Activated CD4-positive, alpha-beta memory T cell treated with anti-CD3 and anti-CD28 coated beads, Interleukin-2, amount 10 ng/mL, durations not matched to agents 7 days and 5 days (primary cell): ENCODE measurements at regions of chr6 and their contacts with region 1.

Region 1: GRCh38 chr6:44475779-44476434 is 88.4 kb downstream of the CDC5L start:
- DNase-seq: peak; percentile 77
- H3K4me3 Mint-ChIP-seq: no peak overlapping the region
- H3K27ac Mint-ChIP-seq: peak overlapping the region; percentile 26
- H3K4me1 Mint-ChIP-seq: peaks cover 4% of the 10 kb centered on the region
- H3K27me3 Mint-ChIP-seq: peaks cover 2% of the 10 kb centered on the region

Region 2: GRCh38 chr6:44397424-44398164 is 78.3 kb before region 1 on chr6:
- CTCF ChIA-PET with region 1: no interaction called
- POLR2A ChIA-PET with region 1: no interaction called
- DNase-seq: no peak
- H3K4me3 Mint-ChIP-seq: no peak overlapping the region
- H3K27ac Mint-ChIP-seq: no peak overlapping the region
- H3K4me1 Mint-ChIP-seq: peaks cover 23% of the 10 kb centered on the region
- H3K27me3 Mint-ChIP-seq: no peaks in the 10 kb centered on the region

Region 3: DNA sequence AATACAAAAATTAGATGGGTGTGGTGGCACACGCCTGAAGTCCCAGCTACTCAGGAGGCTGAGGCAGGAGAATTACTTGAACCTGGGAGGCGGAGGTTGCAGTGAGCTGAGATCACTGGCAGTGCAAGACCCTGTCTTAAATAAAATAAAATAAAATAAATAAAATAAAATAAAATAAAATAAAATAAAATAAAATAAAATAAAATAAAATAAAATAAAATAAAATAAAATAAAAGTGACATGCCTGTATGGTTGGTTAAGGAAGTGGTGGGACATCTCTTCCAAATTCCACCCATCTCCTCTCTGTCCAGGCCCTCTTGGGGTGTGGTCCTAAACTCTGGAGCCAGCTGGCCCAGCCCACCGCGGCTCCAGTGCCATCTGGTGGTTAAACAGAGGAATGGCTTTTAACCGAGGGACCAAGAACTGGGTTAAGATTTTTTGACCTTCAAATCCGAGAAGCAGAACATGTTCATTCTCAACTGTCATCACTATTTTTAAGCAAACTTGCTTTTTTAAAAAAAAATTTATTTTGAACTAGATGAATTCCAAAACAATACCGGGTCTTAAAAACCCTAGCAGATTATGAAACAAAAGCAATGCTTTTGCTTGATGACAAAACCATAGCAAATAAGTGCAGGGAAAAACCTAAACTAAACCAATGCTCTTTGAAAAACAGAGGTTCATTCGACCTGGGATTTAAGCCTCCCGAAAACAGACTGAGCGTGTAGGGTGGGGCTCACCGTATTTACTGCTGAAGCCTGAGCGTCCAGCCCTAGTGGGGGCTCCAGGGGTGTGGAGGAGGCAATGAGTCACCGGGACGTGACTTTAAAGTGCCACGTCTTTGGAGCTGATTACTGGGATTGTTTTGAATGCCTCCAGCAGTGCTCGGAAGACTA is 19.6 kb before region 1 on chr6:
- CTCF ChIA-PET with region 1: interaction called, 15 read pairs
- POLR2A ChIA-PET with region 1: no interaction called
- DNase-seq: peak; percentile 49
- H3K4me3 Mint-ChIP-seq: no peak overlapping the region
- H3K27ac Mint-ChIP-seq: no peak overlapping the region
- H3K4me1 Mint-ChIP-seq: peaks cover 10% of the 10 kb centered on the region
- H3K27me3 Mint-ChIP-seq: peaks cover 5% of the 10 kb centered on the region

Region 4: DNA sequence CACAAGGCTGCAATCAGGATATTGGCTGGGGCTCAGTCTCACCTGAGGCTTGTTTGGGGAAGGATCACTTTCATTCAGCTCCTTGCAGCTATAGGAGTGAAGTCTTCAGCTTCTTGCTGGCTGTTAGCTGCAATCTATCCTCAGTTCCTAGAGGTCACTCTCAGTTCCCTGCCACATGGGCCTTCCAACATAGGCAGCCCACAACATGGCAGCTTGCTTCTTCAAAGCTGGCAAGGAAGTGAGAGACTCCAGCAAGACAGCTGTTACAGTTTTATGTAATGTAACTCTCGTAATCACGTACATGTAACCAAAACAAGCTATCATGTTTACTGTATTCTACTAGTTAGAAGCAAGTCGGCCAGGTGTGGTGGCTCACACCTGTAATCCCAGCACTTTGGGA is 138.5 kb after region 1 on chr6:
- CTCF ChIA-PET with region 1: interaction called, 21 read pairs
- POLR2A ChIA-PET with region 1: no interaction called
- DNase-seq: no peak
- H3K4me3 Mint-ChIP-seq: no peak overlapping the region
- H3K27ac Mint-ChIP-seq: no peak overlapping the region
- H3K4me1 Mint-ChIP-seq: no peaks in the 10 kb centered on the region
- H3K27me3 Mint-ChIP-seq: no peaks in the 10 kb centered on the region

Region 5: GRCh38 chr6:44655412-44656342 is 179.8 kb after region 1 on chr6:
- CTCF ChIA-PET with region 1: interaction called, 22 read pairs
- POLR2A ChIA-PET with region 1: no interaction called
- DNase-seq: peak; percentile 77
- H3K4me3 Mint-ChIP-seq: peak overlapping the region; percentile 21
- H3K27ac Mint-ChIP-seq: peak overlapping the region; percentile 71
- H3K4me1 Mint-ChIP-seq: peaks cover 10% of the 10 kb centered on the region
- H3K27me3 Mint-ChIP-seq: no peaks in the 10 kb centered on the region

Region 6: GRCh38 chr6:45922728-45923351 is 1446.9 kb after region 1 on chr6:
- CTCF ChIA-PET with region 1: interaction called, 20 read pairs
- POLR2A ChIA-PET with region 1: no interaction called
- DNase-seq: peak; percentile 82
- H3K4me3 Mint-ChIP-seq: peak overlapping the region; percentile 13
- H3K27ac Mint-ChIP-seq: peak overlapping the region; percentile 80
- H3K4me1 Mint-ChIP-seq: peaks cover 54% of the 10 kb centered on the region
- H3K27me3 Mint-ChIP-seq: no peaks in the 10 kb centered on the region